ENCODE measurements at regions of chr2 and their contacts with region 1.

Region 1: GRCh38 chr2:677056-677965 is at the start of gene TMEM18:
- DNase-seq: peak; percentile 99
- ATAC-seq: peak; percentile 84
- H3K4me3 ChIP-seq: peak within 1 kb of the TSS; percentile 70
- H3K27ac ChIP-seq: peak within 1 kb of the TSS; percentile 94
- H3K4me1 ChIP-seq: peaks cover 19% of the 10 kb centered on the region
- H3K27me3 ChIP-seq: no peaks in the 10 kb centered on the region
- CTCF ChIP-seq: peak; percentile 32; the same call in 1 of the 2 replicates
- POLR2A ChIP-seq: peak; percentile 92
- RAD21 ChIP-seq: no peak
- total RNA-seq, gene TMEM18: 15.2 and 21.9 TPM in 2 replicates

Region 2: GRCh38 chr2:264660-265468 is 412.4 kb before region 1 on chr2 and contains the start of gene ACP1:
- CTCF ChIA-PET with region 1: no interaction called
- POLR2A ChIA-PET with region 1: no interaction called
- dilution Hi-C with region 1: no loop called
- in situ Hi-C with region 1: no loop called
- intact Hi-C with region 1: loop called (anchors 5 kb)
- DNase-seq: peak; percentile 93
- ATAC-seq: peak; percentile 86
- H3K4me3 ChIP-seq: peak within 1 kb of the TSS; percentile 98
- H3K27ac ChIP-seq: peak within 1 kb of the TSS; percentile 95
- H3K4me1 ChIP-seq: peaks cover 12% of the 10 kb centered on the region
- H3K27me3 ChIP-seq: no peaks in the 10 kb centered on the region
- CTCF ChIP-seq: 0 out of 2 replicates have a peak, but pooled peaks have one; percentile 2
- POLR2A ChIP-seq: peak; percentile 89
- RAD21 ChIP-seq: no peak
- total RNA-seq, gene ACP1: 85.7 and 123 TPM in 2 replicates

Region 3: GRCh38 chr2:660586-661359 is 16.5 kb before region 1 on chr2:
- CTCF ChIA-PET with region 1: no interaction called
- POLR2A ChIA-PET with region 1: no interaction called
- dilution Hi-C with region 1: no loop called
- in situ Hi-C with region 1: no loop called
- intact Hi-C with region 1: no loop called
- DNase-seq: no peak
- ATAC-seq: no peak
- H3K4me3 ChIP-seq: no peak overlapping the region
- H3K27ac ChIP-seq: no peak overlapping the region
- H3K4me1 ChIP-seq: no peaks in the 10 kb centered on the region
- H3K27me3 ChIP-seq: peaks cover 7% of the 10 kb centered on the region
- CTCF ChIP-seq: no peak
- POLR2A ChIP-seq: no peak
- RAD21 ChIP-seq: no peak

Region 4: GRCh38 chr2:735670-736582 is 58.6 kb after region 1 on chr2:
- CTCF ChIA-PET with region 1: no interaction called
- POLR2A ChIA-PET with region 1: no interaction called
- dilution Hi-C with region 1: no loop called
- in situ Hi-C with region 1: no loop called
- intact Hi-C with region 1: loop called (anchors 1 kb)
- DNase-seq: no peak
- ATAC-seq: no peak
- H3K4me3 ChIP-seq: no peak overlapping the region
- H3K27ac ChIP-seq: no peak overlapping the region
- H3K4me1 ChIP-seq: no peaks in the 10 kb centered on the region
- H3K27me3 ChIP-seq: peaks cover 1% of the 10 kb centered on the region; the same call in 1 of the 2 replicates
- CTCF ChIP-seq: no peak
- POLR2A ChIP-seq: no peak
- RAD21 ChIP-seq: no peak

Region 5: GRCh38 chr2:950080-950966 is 273.0 kb after region 1 on chr2 and contains the start of gene SNTG2:
- CTCF ChIA-PET with region 1: no interaction called
- POLR2A ChIA-PET with region 1: no interaction called
- dilution Hi-C with region 1: no loop called
- in situ Hi-C with region 1: no loop called
- intact Hi-C with region 1: loop called (anchors 5 kb)
- DNase-seq: no peak
- ATAC-seq: peak; percentile 87
- H3K4me3 ChIP-seq: peak within 1 kb of the TSS; percentile 46
- H3K27ac ChIP-seq: no peak within 1 kb of the TSS
- H3K4me1 ChIP-seq: no peaks in the 10 kb centered on the region
- H3K27me3 ChIP-seq: peaks cover 28% of the 10 kb centered on the region
- CTCF ChIP-seq: no peak
- POLR2A ChIP-seq: no peak
- RAD21 ChIP-seq: no peak
- total RNA-seq, gene SNTG2: under 0.01 and 0.56 TPM in 2 replicates

Region 6: GRCh38 chr2:1742681-1743395 is 1065.5 kb after region 1 on chr2:
- CTCF ChIA-PET with region 1: no interaction called
- POLR2A ChIA-PET with region 1: no interaction called
- dilution Hi-C with region 1: no loop called
- in situ Hi-C with region 1: no loop called
- intact Hi-C with region 1: loop called (anchors 5 kb)
- DNase-seq: peak; percentile 90
- ATAC-seq: peak; percentile 55
- H3K4me3 ChIP-seq: peak overlapping the region; percentile 52
- H3K27ac ChIP-seq: peak overlapping the region; percentile 80
- H3K4me1 ChIP-seq: peaks cover 37% of the 10 kb centered on the region
- H3K27me3 ChIP-seq: no peaks in the 10 kb centered on the region
- CTCF ChIP-seq: peak; percentile 68
- POLR2A ChIP-seq: peak; percentile 55; the same call in 1 of the 2 replicates
- RAD21 ChIP-seq: peak; percentile 76